Natural killer cell (primary cell): ENCODE measurements at regions of chr15 and their contacts with region 1.

Region 1: GRCh38 chr15:101294731-101295606 is at the start of gene SNRPA1:
- DNase-seq: peak; percentile 98
- ATAC-seq: peak; percentile 85 to 94 (median 88)
- H3K4me3 ChIP-seq: peak within 1 kb of the TSS; percentile 99
- H3K4me3 Mint-ChIP-seq: peak within 1 kb of the TSS; percentile 97
- H3K27ac ChIP-seq: peak within 1 kb of the TSS; percentile 97
- H3K27ac Mint-ChIP-seq: peak within 1 kb of the TSS; percentile 90 to 92
- H3K4me1 ChIP-seq: peaks cover 20% of the 10 kb centered on the region
- H3K4me1 Mint-ChIP-seq: peaks cover 42 to 45% of the 10 kb centered on the region in 2 donors
- H3K27me3 ChIP-seq: no peaks in the 10 kb centered on the region
- H3K27me3 Mint-ChIP-seq: no peaks in the 10 kb centered on the region
- CTCF ChIP-seq: no peak
- total RNA-seq, gene SNRPA1: 146 to 174 (median 167) TPM

Region 2: GRCh38 chr15:101242160-101242998 is 52.6 kb before region 1 on chr15:
- intact Hi-C with region 1: loop called (anchors 2 kb)
- DNase-seq: peak; percentile 62 to 90
- ATAC-seq: peak; percentile 92 to 95 (median 94)
- H3K4me3 ChIP-seq: peak overlapping the region; percentile 10
- H3K4me3 Mint-ChIP-seq: peak overlapping the region; percentile 93
- H3K27ac ChIP-seq: peak overlapping the region; percentile 62
- H3K27ac Mint-ChIP-seq: peak overlapping the region; percentile 85 to 95
- H3K4me1 ChIP-seq: peaks cover 56% of the 10 kb centered on the region
- H3K4me1 Mint-ChIP-seq: peaks cover 81 to 85% of the 10 kb centered on the region in 2 donors
- H3K27me3 ChIP-seq: no peaks in the 10 kb centered on the region
- H3K27me3 Mint-ChIP-seq: no peaks in the 10 kb centered on the region
- CTCF ChIP-seq: no peak

Region 3: DNA sequence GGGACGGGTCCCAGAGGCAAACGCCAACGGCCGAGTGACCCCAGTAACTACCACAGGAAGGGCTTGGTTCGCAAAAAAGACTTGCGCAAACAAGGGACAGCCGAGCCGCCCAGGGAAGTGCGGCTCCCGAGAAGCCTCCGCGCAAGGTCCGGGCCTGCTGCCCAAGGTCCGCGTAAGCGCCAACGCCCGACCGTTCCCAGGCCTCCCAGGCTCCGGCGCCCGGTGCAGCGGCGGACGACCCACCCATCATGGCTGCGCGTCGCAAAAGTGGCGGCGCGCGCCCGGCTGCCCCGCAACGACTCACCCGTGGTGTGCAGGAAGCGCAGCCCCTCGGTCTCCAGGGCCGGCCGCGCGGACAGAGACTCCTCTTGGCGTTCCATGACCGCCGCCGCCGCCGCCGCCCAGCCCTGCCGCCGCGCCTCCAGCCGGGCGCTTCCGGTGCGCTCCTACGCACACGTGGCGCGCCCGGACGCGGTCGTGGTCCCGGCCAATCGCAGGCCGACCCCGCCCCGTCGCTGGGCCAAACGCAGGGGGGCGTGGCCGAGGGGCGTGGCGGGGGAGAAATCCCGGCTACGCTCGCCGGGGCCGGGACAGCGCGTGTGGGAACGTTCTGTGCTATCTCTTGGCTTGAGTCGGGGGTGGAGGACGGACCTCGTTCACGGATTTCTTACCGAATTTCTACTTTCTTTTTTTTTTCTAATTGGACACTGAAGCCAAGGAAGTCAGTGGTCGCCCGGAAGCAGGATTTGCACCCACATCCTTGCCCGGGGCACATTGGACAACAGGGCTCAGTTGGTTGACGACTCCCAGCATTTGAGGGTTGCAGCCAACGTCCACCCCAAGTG is 17.7 kb before region 1 on chr15 and contains the start of gene SELENOS:
- intact Hi-C with region 1: loop called (anchors 2 kb)
- DNase-seq: peak; percentile 87 to 94
- ATAC-seq: peak; percentile 95 to 99 (median 96)
- H3K4me3 ChIP-seq: peak within 1 kb of the TSS; percentile 92
- H3K4me3 Mint-ChIP-seq: peak within 1 kb of the TSS; percentile 94
- H3K27ac ChIP-seq: peak within 1 kb of the TSS; percentile 75
- H3K27ac Mint-ChIP-seq: peak within 1 kb of the TSS; percentile 90 to 94
- H3K4me1 ChIP-seq: peaks cover 20% of the 10 kb centered on the region
- H3K4me1 Mint-ChIP-seq: peaks cover 15 to 16% of the 10 kb centered on the region in 2 donors
- H3K27me3 ChIP-seq: no peaks in the 10 kb centered on the region
- H3K27me3 Mint-ChIP-seq: no peaks in the 10 kb centered on the region
- CTCF ChIP-seq: no peak
- total RNA-seq, gene SELENOS: 33.6 to 44.2 (median 38.4) TPM

Region 4: GRCh38 chr15:101501703-101502373 is 206.9 kb after region 1 on chr15:
- intact Hi-C with region 1: loop called (anchors 1 kb)
- DNase-seq: peak; percentile 28 to 63
- ATAC-seq: peak; percentile 66 to 91 (median 89)
- H3K4me3 ChIP-seq: no peak overlapping the region
- H3K4me3 Mint-ChIP-seq: peak overlapping the region; percentile 28
- H3K27ac ChIP-seq: no peak overlapping the region
- H3K27ac Mint-ChIP-seq: peak overlapping the region in 1 of 2 donors; percentile 75
- H3K4me1 ChIP-seq: peaks cover 10% of the 10 kb centered on the region
- H3K4me1 Mint-ChIP-seq: peaks cover 11 to 27% of the 10 kb centered on the region in 2 donors
- H3K27me3 ChIP-seq: peaks cover 7% of the 10 kb centered on the region
- H3K27me3 Mint-ChIP-seq: peaks cover 17 to 38% of the 10 kb centered on the region in 2 donors
- CTCF ChIP-seq: peak; percentile 50

Region 5: DNA sequence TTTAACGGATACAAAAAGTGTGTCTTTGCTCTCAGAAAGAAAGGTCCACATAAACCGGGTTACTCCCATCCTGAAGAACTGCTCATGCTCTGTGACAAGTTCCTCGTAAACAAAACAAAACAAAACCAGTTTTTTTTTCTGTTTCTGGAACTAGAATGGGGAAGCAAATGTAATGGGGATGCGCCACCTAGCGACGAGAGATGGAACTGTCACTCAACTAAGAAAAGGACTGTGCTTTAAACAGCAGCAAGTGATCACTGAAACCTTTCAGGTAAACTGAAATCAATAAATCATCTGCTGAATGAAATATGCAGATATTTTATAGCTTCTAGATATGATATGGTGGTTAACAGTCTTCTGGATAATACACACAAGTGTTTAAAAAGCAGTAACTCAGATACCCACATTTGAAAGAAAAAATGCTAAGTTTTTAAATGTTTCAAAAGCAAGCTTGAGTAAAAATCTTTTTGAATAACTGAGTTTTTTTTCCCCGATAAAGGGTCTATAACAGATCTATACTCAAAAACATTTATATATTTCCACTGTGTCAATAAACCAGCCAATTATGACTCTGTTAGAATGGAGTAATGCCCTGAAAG is 346.3 kb after region 1 on chr15:
- intact Hi-C with region 1: loop called (anchors 1 kb)
- DNase-seq: peak; percentile 72 to 91
- ATAC-seq: peak; percentile 78 to 83 (median 82)
- H3K4me3 ChIP-seq: no peak overlapping the region
- H3K4me3 Mint-ChIP-seq: peak overlapping the region; percentile 25
- H3K27ac ChIP-seq: peak overlapping the region; percentile 20
- H3K27ac Mint-ChIP-seq: peak overlapping the region; percentile 89 to 93
- H3K4me1 ChIP-seq: no peaks in the 10 kb centered on the region
- H3K4me1 Mint-ChIP-seq: peaks cover 19 to 21% of the 10 kb centered on the region in 2 donors
- H3K27me3 ChIP-seq: no peaks in the 10 kb centered on the region
- H3K27me3 Mint-ChIP-seq: no peaks in the 10 kb centered on the region
- CTCF ChIP-seq: peak; percentile 97